ENCODE measurements at regions of chr12 and their contacts with region 1.

Region 1: DNA sequence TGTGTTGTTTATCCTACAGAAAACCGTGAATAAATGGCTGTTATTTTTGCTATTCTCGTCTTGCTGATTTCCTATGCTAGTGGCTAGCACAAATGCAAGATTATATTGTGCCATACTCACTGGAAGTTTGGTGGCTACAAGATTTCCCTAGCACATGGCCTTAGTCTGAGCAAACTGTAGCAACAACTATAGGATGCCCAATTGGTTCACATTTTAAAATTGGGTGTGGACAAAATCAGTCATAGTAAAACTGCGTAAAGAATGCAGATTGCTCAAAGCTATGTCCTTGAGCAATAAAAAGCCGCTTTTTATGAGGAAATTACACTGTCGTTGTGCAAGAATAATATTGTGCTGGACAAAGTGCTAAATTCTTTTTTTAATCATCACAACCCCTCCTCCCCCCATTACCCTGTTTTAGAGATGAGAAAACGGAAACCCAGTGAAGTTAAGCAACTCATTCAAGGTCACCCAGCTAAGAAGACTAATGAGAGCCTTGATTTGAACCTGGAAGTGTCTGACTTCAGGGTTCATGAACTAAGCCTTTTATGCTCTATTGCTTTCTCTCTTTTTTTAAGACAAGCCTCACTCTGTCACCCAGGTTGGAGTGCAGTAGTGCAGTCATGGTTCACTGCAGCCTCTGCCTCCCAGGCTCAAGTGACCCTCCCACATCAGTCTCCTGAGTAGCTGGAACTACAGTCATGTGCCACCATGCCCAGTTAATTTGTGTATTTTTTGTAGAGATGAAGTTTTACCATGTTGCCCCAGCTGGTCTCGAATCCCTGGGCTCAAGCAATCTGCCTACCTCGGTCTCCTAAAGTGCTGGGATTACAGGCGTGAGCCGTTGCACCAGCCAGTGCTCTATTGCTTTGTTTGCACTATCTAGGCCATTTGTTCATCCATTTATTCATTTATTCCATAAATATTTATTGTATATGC is 73.6 kb downstream of the SRGAP1 start:
- DNase-seq: peak; percentile 97
- H3K4me3 Mint-ChIP-seq: peak overlapping the region; percentile 0
- H3K27ac Mint-ChIP-seq: peak overlapping the region; percentile 89
- H3K4me1 Mint-ChIP-seq: peaks cover 80% of the 10 kb centered on the region
- H3K27me3 Mint-ChIP-seq: no peaks in the 10 kb centered on the region
- CTCF ChIP-seq: no peak

Region 2: GRCh38 chr12:63888908-63889635 is 29.1 kb before region 1 on chr12:
- CTCF ChIA-PET with region 1: interaction called, 4 read pairs
- POLR2A ChIA-PET with region 1: interaction called, 10 read pairs
- intact Hi-C with region 1: no loop called
- DNase-seq: peak; percentile 39
- H3K4me3 Mint-ChIP-seq: no peak overlapping the region
- H3K27ac Mint-ChIP-seq: peak overlapping the region; percentile 27
- H3K4me1 Mint-ChIP-seq: peaks cover 33% of the 10 kb centered on the region
- H3K27me3 Mint-ChIP-seq: no peaks in the 10 kb centered on the region
- CTCF ChIP-seq: no peak

Region 3: GRCh38 chr12:63905544-63905943 is 12.6 kb before region 1 on chr12:
- CTCF ChIA-PET with region 1: interaction called, 3 read pairs
- POLR2A ChIA-PET with region 1: interaction called, 30 read pairs
- intact Hi-C with region 1: no loop called
- DNase-seq: peak; percentile 89
- H3K4me3 Mint-ChIP-seq: peak overlapping the region; percentile 70
- H3K27ac Mint-ChIP-seq: peak overlapping the region; percentile 92
- H3K4me1 Mint-ChIP-seq: peaks cover 33% of the 10 kb centered on the region
- H3K27me3 Mint-ChIP-seq: no peaks in the 10 kb centered on the region
- CTCF ChIP-seq: no peak

Region 4: GRCh38 chr12:63955831-63956609 is 37.9 kb after region 1 on chr12:
- CTCF ChIA-PET with region 1: interaction called, 3 read pairs
- POLR2A ChIA-PET with region 1: interaction called, 11 read pairs
- intact Hi-C with region 1: no loop called
- DNase-seq: peak; percentile 78
- H3K4me3 Mint-ChIP-seq: peak overlapping the region; percentile 39
- H3K27ac Mint-ChIP-seq: peak overlapping the region; percentile 88
- H3K4me1 Mint-ChIP-seq: peaks cover 31% of the 10 kb centered on the region
- H3K27me3 Mint-ChIP-seq: no peaks in the 10 kb centered on the region
- CTCF ChIP-seq: no peak

Region 5: DNA sequence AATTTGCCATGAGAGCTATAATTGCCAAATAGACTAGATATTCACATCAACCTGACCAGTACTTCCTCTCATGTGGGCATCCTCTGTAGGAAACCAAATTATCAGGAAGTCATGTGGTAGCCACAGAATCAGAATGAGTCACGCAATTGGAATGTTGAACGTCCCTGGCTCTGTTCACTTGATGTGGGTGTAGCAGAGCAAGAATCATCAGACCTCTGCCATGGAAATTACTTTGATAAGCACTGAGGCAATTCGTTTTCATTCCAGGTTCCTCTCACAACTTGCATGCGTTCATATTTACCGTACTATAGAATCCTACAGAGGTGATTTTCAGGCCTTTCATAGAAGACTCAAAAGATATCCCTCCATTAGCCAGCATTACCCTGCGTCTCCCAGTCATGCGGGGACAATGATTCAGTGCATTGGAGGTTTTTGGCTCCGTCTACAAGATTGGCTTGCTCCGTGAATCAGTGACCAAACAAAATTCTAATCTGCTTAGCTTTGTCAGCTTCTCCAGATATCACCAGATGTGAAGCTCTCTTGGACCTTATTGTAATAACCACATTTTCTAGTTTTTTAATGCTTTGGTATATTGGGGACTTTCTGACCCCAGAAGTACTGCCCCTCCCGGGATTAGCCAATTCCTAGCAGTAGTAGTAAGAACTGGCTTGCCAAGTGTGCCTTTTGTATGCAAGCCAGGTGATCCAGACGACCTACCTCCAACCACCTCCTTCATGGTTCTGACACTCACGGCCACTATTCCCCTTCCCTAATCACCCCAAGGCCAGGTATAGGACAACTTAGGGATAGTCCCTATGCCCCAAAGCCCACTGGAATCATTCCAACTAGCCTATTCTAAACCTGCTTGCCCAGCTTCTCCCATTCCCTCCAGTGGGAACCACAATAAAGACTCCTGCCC is 170.6 kb after region 1 on chr12:
- CTCF ChIA-PET with region 1: interaction called, 3 read pairs
- POLR2A ChIA-PET with region 1: interaction called, 8 read pairs
- intact Hi-C with region 1: loop called (anchors 5 kb)
- DNase-seq: peak; percentile 94
- H3K4me3 Mint-ChIP-seq: peak overlapping the region; percentile 73
- H3K27ac Mint-ChIP-seq: peak overlapping the region; percentile 99
- H3K4me1 Mint-ChIP-seq: peaks cover 23% of the 10 kb centered on the region
- H3K27me3 Mint-ChIP-seq: no peaks in the 10 kb centered on the region
- CTCF ChIP-seq: no peak

Region 6: DNA sequence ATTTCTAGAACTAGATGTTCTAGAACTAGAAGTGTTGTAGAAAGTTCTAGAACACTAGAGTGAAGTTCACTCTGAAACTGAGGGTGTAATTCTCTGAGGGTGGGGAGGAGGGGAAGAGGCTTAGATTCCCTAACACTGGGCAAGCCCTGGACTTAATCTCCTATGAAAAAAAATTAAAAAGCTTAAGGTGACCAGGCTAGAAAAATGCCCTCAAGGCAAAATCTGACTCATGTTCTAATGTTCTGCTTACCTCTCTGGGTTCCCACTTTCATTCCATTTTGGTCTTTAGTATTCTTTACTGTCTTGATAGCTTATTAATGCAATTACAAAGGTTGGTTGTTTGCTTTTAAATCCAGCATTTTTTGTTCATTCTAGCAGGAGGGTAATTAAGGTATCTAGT is 202.4 kb after region 1 on chr12:
- CTCF ChIA-PET with region 1: no interaction called
- POLR2A ChIA-PET with region 1: no interaction called
- intact Hi-C with region 1: no loop called
- DNase-seq: peak; percentile 75
- H3K4me3 Mint-ChIP-seq: no peak overlapping the region
- H3K27ac Mint-ChIP-seq: peak overlapping the region; percentile 86
- H3K4me1 Mint-ChIP-seq: peaks cover 20% of the 10 kb centered on the region
- H3K27me3 Mint-ChIP-seq: no peaks in the 10 kb centered on the region
- CTCF ChIP-seq: no peak

Region 7: DNA sequence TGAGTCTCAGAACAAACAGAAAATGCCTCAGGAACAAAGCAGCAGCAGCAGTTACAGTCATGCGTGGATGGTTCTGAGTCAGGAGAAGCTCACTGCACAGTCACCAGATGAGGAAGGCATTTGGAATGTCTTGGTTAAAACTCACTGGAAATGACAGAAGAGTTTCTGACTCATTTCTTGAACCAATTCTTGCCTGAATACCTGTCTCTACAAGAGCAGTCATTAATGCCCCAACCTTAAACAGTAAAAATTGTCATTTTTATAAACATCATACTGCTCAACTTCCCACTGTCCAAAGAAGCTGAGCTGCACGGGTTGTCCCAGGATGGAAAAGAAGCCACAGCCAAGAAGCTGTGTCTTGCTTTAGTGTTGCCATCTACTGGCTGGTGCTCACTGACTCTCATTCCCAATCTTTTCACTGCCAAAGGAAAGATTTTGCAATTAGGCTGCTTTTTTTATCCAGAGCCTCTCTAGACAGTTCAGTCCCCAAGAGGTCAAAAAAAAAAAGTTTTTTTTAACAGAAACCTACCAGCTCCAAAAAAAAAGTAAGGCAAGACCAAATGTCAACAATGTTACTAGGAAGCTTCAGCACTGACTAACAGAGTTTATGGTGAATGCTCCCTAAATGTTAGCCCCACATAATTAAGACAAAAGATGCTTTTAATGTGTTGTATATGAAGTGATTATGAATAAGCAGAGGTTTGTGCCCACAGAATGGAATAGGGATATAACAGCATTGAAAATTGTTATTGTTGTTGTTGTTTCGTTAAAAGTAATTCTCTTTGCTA is 263.6 kb after region 1 on chr12:
- CTCF ChIA-PET with region 1: no interaction called
- POLR2A ChIA-PET with region 1: interaction called, 11 read pairs
- intact Hi-C with region 1: loop called (anchors 5 kb)
- DNase-seq: peak; percentile 95
- H3K4me3 Mint-ChIP-seq: peak overlapping the region; percentile 17
- H3K27ac Mint-ChIP-seq: peak overlapping the region; percentile 92
- H3K4me1 Mint-ChIP-seq: peaks cover 49% of the 10 kb centered on the region
- H3K27me3 Mint-ChIP-seq: no peaks in the 10 kb centered on the region
- CTCF ChIP-seq: peak; percentile 56

Region 8: DNA sequence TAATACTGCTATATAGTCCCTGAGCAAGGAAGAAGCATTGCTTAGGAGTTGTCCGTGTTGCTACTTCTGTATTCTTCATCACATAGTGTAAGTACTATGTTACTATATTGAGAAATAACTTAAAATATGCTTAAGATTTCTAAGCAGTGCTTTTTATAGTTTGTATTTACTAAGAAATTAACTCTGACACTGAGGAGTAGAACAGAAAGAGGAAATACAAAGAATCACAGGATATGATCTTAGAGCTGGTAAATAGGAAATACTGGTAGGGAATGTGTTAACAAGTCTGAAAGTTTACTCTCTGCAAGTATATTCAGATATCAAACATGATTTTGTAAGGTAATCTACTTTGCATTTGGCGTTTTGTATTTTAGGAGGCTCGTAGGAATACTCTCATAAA is 501.6 kb after region 1 on chr12:
- CTCF ChIA-PET with region 1: no interaction called
- POLR2A ChIA-PET with region 1: no interaction called
- intact Hi-C with region 1: no loop called
- DNase-seq: no peak
- H3K4me3 Mint-ChIP-seq: no peak overlapping the region
- H3K27ac Mint-ChIP-seq: no peak overlapping the region
- H3K4me1 Mint-ChIP-seq: no peaks in the 10 kb centered on the region
- H3K27me3 Mint-ChIP-seq: no peaks in the 10 kb centered on the region
- CTCF ChIP-seq: no peak

Measured in MCF 10A (cell line).